Activated CD8-positive, alpha-beta T cell treated with anti-CD3 and anti-CD28 coated beads, Interleukin-2, amount 10 ng/mL, durations not matched to agents 7 days and 5 days (primary cell): ENCODE measurements at regions of chr1 and their contacts with region 1.

Region 1: DNA sequence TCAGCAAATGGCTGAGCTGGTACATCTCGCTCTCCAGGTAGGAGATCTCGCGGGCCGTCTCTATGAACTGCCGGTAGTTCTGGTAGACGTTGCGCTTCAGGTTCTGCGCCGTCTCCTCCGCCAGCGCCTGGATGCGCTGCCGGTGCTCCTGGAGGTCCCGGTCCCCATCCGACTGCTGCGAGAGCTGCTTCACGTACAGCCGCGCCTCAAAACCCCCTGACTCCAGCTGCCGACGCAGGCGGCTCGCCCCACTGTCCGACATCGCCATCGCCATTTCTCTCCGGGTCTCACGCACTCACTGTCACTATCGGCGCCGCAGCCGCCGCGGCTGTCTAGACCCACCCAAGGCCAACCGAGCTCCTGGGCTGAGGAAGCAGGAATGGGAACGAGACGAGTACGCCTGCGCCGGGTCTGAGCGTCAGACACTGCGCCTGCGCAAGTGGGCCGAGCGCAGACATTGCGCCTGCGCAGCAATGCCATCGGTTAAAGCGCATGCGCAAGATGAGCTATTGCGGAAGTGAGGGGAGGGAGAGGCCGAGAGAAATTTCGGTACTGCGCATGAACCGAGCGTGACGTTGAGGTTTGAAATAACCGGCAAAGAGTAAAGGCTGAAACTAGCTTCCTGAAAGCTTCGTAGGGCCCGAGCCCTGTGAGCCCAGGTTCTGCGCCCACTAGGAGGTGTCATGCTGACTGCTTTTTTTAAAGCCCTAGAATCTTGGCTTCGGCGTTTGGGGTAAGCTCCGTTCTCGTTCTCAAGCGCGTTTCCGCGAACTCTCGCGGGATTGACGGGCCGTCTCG is at the start of gene EXOC8:
- DNase-seq: peak; percentile 97
- ATAC-seq: peak; percentile 86
- H3K4me3 Mint-ChIP-seq: peak within 1 kb of the TSS; percentile 100
- H3K27ac Mint-ChIP-seq: peak within 1 kb of the TSS; percentile 99
- H3K4me1 Mint-ChIP-seq: peaks cover 57% of the 10 kb centered on the region
- H3K27me3 Mint-ChIP-seq: peaks cover 2% of the 10 kb centered on the region
- total RNA-seq, gene EXOC8: 18.2 to 18.4 TPM

Region 2: DNA sequence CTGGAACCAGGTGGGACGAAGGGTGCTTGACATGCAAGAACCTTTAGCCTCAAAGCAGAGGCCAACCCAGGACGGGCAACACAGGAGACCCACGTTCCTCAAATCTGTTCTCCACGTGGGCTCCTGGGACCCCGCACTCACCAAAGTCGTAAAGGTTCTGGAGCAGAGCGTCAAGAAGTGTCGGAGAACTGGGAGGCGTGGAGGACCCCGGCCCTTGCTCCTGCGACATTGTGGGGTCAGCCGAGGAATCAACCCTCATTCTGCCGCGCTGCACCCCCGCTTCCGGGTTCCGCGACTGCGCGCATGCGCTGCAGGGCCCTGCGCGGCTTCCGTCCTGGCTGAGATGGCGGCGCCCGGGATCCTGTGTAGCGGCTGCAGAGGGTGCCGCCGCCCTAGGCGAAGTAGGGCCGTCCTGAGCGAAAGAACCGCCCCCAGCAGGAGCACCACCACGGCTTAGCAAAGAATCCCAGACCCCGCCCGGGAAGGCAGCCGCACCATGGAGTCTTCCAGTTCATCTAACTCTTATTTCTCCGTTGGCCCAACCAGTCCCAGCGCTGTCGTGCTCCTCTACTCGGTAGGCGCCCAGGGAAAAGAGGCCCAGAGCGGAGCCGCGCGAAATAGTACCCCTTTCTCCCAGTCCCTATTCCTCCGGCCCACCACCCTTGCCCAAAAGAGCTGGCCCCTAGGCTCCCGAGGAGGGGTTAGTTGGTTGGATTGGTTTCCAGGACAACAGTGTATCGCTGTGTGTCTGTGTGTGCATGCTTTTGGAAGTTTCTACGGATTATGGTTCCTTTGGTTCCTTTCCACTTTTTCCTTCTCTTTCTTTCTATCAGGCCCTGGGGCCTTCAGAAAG is 96.6 kb before region 1 on chr1 and contains the start of gene GNPAT:
- CTCF ChIA-PET with region 1: interaction called, 14 read pairs
- POLR2A ChIA-PET with region 1: interaction called, 14 read pairs
- DNase-seq: peak; percentile 92
- ATAC-seq: peak; percentile 99
- H3K4me3 Mint-ChIP-seq: peak within 1 kb of the TSS; percentile 93
- H3K27ac Mint-ChIP-seq: peak within 1 kb of the TSS; percentile 95
- H3K4me1 Mint-ChIP-seq: peaks cover 56% of the 10 kb centered on the region
- H3K27me3 Mint-ChIP-seq: no peaks in the 10 kb centered on the region
- total RNA-seq, gene GNPAT: 35.7 to 37.9 TPM

Region 3: DNA sequence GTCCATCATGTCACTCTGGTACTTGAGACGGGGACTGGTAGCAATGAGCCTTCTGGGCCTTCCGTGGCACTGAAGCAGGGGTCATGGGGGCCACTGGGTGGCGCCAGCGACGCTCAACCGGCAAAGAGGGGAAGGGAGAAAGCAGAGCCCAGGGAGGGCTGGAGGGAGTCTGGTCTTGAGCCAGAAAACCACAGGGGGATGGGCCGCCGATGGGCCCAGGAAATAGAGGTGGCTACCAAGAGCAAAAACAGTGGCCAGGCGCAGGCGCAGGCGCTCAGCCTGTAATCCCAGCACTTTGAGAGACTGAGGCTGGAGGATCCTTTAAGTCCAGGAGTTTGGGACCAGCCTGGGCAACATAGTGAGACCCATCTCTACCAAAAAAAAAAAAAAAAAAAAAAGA is 21.8 kb before region 1 on chr1:
- CTCF ChIA-PET with region 1: interaction called, 27 read pairs
- POLR2A ChIA-PET with region 1: interaction called, 3 read pairs
- DNase-seq: peak; percentile 60
- ATAC-seq: peak; percentile 82
- H3K4me3 Mint-ChIP-seq: no peak overlapping the region
- H3K27ac Mint-ChIP-seq: no peak overlapping the region
- H3K4me1 Mint-ChIP-seq: peaks cover 3% of the 10 kb centered on the region
- H3K27me3 Mint-ChIP-seq: no peaks in the 10 kb centered on the region

Region 4: GRCh38 chr1:231357831-231358354 is 20.2 kb after region 1 on chr1:
- CTCF ChIA-PET with region 1: interaction called, 24 read pairs
- POLR2A ChIA-PET with region 1: interaction called, 5 read pairs
- DNase-seq: peak; percentile 57
- ATAC-seq: peak; percentile 85
- H3K4me3 Mint-ChIP-seq: no peak overlapping the region
- H3K27ac Mint-ChIP-seq: peak overlapping the region; percentile 4
- H3K4me1 Mint-ChIP-seq: peaks cover 8% of the 10 kb centered on the region
- H3K27me3 Mint-ChIP-seq: no peaks in the 10 kb centered on the region

Region 5: GRCh38 chr1:231421993-231422764 is 84.5 kb after region 1 on chr1 and contains the start of gene EGLN1:
- CTCF ChIA-PET with region 1: interaction called, 18 read pairs
- POLR2A ChIA-PET with region 1: interaction called, 18 read pairs
- DNase-seq: peak; percentile 85
- ATAC-seq: peak; percentile 85
- H3K4me3 Mint-ChIP-seq: peak within 1 kb of the TSS; percentile 91
- H3K27ac Mint-ChIP-seq: peak within 1 kb of the TSS; percentile 89
- H3K4me1 Mint-ChIP-seq: peaks cover 35% of the 10 kb centered on the region
- H3K27me3 Mint-ChIP-seq: peaks cover 14% of the 10 kb centered on the region
- total RNA-seq, gene EGLN1: 30.5 to 32.6 TPM

Region 6: GRCh38 chr1:231528172-231529029 is 190.7 kb after region 1 on chr1 and contains the start of gene TSNAX:
- CTCF ChIA-PET with region 1: interaction called, 12 read pairs
- POLR2A ChIA-PET with region 1: interaction called, 7 read pairs
- DNase-seq: peak; percentile 92
- ATAC-seq: peak; percentile 93
- H3K4me3 Mint-ChIP-seq: peak within 1 kb of the TSS; percentile 97
- H3K27ac Mint-ChIP-seq: peak within 1 kb of the TSS; percentile 100
- H3K4me1 Mint-ChIP-seq: peaks cover 33% of the 10 kb centered on the region
- H3K27me3 Mint-ChIP-seq: no peaks in the 10 kb centered on the region
- total RNA-seq, gene TSNAX: 37.2 to 42.7 TPM

Region 7: DNA sequence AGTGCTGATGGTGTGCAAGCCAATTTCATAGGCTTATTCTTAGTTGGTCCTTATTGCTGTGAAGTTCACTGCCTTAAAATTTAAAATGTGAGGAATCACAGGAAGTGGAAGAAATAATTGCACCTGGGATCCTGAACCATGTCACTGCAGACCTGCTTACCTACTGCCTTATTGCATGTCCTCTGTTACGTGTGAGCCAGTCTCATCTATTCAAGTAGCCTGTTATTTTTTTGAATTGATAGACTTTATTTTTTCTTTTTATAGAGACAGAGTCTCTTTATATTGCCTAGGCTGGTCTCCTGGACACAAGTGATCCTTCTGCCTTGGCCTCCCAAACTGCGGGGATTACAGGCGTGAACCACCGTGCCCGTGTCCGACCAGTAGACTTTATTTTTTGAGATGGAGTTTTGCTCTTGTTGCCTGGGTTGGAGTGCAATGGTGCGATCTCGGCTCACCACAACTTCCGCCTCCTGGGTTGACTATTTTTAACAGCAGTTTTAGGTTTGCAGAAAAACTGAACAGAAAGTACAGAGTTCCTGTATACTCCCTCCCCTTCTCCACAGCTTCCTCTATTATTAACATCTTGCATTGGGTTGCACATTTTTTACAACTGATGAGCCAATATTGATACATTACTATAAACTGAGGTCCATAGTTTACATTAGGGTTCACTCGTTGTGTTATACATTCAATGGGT is 274.9 kb after region 1 on chr1:
- CTCF ChIA-PET with region 1: interaction called, 3 read pairs
- POLR2A ChIA-PET with region 1: interaction called, 14 read pairs
- DNase-seq: peak; percentile 83
- ATAC-seq: peak; percentile 93
- H3K4me3 Mint-ChIP-seq: peak overlapping the region; percentile 56
- H3K27ac Mint-ChIP-seq: peak overlapping the region; percentile 88
- H3K4me1 Mint-ChIP-seq: peaks cover 60% of the 10 kb centered on the region
- H3K27me3 Mint-ChIP-seq: peaks cover 7% of the 10 kb centered on the region